ENCODE measurements at regions of chr2 and their contacts with region 1.

Region 1: DNA sequence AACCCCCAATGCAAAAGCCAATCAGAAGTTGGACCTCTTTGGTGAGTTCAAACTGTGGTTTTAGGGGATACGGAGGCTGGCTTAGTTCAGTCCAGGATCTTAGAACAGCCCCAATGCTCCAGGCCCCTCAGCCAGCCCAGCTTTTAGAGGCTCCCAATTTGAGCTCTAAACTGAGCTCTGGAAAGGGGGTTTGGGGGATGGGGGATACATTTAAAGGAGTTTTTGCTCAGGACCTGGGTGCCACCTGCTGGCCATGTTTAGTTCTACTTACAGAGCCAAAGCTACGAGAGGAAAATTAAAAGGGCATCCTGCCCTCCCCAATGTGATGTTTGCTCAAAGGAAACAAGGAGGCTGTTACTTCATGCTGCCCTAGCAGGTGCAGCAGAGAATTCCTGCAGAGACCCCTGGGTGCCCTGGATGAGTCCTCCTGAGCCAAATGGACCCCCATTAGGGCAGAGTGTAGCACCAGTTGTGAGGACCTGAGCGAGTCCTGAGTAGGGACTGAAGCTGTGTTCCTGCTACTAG is 15.9 kb upstream of the TMEM214 start:
- DNase-seq: peak; percentile 85

Region 2: GRCh38 chr2:26840937-26841613 is 175.8 kb before region 1 on chr2:
- intact Hi-C with region 1: loop called in 1 of 2 experiments (anchors 5 kb)
- DNase-seq: no peak

Region 3: DNA sequence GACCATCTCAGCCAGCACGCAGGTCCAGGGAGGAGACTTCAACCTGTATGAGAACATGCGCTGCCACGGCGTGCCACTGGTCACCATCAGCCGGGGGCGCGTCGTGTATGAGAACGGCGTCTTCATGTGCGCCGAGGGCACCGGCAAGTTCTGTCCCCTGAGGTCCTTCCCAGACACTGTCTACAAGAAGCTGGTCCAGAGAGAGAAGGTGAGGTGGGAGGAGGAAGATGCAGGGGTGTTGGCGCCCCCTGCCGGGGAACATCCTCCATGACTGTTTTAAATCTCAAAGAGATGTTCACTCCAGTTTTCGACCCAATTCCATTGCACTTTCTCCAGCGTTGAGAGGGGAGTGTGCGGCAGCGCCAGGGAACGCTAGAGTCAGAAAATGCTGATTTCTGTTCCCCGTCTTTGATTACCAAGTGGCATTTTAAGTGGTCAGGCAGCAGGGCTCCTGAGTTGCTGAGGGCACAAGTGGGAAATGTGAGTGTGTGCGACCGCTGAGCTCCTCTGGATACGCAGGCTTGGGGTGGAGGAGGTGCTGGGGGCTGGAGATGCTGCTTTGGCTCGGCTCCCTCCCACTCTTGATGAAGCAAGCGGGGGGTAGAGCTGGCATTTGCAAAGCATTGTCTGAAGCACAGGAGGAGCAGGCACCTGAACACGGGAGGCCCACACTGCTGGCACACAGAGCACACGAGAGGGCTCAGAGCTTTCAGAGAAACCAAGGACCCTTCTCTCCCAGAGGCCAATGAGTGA is 74.1 kb before region 1 on chr2:
- intact Hi-C with region 1: no loop called
- DNase-seq: peak; percentile 86

Region 4: DNA sequence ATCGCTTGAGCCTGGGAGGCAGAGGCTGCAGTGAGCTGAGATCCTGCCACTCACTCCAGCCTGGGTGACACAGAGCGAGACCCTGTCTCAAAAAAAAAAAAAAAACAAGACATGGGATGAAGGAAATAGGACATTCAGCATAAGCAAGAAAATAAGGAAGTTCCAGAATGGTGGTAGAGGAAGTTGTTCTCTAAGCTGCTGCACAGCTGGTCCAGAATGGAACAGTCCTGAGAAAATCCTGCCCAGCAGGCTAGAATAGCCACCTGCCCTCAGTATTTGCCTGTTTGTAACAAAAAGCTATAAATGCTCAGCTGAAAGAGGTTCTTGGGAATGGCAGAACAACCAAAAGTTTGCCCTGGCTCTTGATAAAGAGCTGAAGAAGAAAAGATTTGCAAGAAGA is 57.5 kb before region 1 on chr2:
- intact Hi-C with region 1: loop called (anchors 2 kb)
- DNase-seq: no peak

Region 5: DNA sequence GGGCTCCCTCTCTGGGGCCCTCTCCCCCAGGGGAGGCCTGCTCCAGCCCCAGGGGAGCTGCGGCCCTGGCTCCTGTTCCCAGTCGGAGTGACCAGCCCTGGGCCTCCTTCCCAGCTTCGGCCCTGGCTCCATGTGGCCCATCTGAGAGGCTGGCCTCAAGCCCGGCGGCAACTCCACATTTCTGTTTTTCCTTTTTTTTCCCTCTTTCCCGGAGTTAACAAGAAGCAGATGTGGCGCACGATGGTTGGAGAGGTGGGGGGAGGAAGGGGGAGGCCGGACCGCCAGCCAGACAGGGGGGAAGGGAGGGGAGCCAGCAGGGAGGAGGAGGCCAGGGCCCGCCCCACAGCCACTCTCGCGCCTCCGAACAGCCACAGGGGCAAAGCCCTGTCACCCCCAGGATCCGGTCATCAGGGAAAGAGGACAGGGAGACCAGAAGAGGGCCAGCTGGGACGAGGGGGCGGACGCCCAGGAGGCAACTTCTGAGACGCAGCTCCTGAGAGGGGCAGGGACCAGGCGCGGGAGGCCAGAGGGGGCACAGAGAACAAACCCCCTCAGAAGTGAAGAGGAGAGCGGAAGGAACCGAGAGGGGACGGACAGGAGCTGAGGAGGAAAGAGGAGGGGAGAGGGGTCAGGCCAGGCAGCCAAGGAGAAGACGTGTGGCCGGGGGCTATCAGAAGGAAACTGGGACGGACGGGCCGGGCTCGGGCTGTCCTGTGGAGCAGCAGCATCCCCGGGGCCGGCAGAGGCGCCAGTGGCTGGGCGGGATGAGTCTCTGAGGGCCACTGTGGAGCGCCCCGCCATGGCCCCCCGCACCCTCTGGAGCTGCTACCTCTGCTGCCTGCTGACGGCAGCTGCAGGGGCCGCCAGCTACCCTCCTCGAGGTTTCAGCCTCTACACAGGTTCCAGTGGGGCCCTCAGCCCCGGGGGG is 61.7 kb after region 1 on chr2 and contains the start of gene EMILIN1:
- intact Hi-C with region 1: no loop called
- DNase-seq: peak; percentile 95
- total RNA-seq, gene EMILIN1: 178 to 323 TPM